ENCODE measurements at regions of chr1 and their contacts with region 1.

Region 1: DNA sequence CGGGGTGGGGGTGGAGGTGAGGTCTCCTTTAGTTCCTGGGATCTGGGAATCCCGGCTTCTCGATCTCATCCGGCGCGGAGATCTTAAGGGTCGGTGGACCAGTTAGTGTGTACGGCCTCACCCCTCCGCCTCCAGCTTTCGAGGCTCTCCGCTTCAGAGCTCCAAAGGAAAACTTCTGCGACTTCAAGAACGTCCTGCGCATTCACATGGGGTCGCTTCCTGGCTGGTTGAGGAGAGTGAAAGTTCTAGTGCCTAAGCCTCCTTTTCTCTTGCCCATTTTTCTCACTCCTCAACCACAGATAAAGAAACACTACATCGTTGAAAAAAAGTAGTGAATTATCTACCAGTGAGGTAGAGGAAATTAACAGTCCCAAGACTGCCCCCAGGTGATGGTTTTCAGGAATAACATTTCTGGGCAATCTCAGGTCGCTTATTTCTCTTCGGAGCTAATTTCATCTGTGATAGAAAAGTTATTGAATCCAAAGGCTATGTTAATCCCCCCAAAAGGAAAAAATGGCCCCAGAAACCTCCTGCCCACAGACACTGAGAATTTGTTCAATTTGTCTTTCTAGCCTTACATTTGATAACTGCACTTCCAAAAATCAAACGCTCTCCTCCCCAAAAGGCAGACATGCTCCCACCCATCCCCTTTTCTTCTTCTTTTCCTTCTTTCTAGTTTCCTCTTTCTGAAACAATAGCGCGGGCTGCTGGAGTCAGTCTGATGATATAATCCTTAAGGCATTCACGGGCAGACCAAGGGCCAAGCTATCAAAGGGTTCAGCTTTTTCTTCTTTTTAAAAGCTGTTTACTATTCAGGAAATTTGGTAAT is 20.6 kb upstream of the TBX15 start:
- DNase-seq: no peak
- ATAC-seq: peak; percentile 39
- H3K4me3 Mint-ChIP-seq: peak overlapping the region; percentile 23
- H3K27ac Mint-ChIP-seq: no peak overlapping the region
- H3K4me1 Mint-ChIP-seq: peaks cover 10% of the 10 kb centered on the region
- H3K27me3 Mint-ChIP-seq: peaks cover 72% of the 10 kb centered on the region
- CTCF ChIP-seq: peak; percentile 51

Region 2: DNA sequence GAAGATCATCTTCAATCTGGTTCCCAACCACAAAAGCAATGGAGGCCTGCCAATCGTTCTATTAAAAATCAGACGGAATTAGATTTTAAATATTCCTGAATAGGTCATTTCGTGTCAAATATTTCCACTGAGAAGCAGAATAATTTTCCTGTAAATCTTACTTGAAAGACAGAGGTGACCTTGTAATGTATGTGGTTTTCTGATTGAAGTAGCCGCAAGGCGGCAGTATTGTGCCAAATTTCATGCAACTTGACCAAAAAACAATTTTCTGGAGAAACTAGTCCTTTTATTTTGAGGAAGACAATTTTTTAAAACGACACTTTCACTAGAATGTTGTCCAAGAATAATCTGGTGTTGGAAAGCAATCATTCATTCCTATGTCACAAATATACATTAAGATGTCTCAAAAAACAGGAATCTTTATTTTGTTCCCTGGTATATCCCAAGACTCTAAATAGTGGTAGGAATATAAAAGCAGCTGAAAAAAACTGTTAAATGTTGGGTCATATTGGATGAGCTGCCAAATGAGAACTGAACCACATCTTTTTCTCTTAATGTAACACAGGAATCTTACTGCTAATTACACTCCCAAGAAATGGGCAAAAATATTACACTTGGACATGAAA is 857.3 kb before region 1 on chr1:
- CTCF ChIA-PET with region 1: interaction called, 8 read pairs
- POLR2A ChIA-PET with region 1: no interaction called
- intact Hi-C with region 1: loop called (anchors 5 kb)
- DNase-seq: peak; percentile 66
- ATAC-seq: no peak
- H3K4me3 Mint-ChIP-seq: no peak overlapping the region
- H3K27ac Mint-ChIP-seq: no peak overlapping the region
- H3K4me1 Mint-ChIP-seq: no peaks in the 10 kb centered on the region
- H3K27me3 Mint-ChIP-seq: no peaks in the 10 kb centered on the region
- CTCF ChIP-seq: peak; percentile 83

Region 3: DNA sequence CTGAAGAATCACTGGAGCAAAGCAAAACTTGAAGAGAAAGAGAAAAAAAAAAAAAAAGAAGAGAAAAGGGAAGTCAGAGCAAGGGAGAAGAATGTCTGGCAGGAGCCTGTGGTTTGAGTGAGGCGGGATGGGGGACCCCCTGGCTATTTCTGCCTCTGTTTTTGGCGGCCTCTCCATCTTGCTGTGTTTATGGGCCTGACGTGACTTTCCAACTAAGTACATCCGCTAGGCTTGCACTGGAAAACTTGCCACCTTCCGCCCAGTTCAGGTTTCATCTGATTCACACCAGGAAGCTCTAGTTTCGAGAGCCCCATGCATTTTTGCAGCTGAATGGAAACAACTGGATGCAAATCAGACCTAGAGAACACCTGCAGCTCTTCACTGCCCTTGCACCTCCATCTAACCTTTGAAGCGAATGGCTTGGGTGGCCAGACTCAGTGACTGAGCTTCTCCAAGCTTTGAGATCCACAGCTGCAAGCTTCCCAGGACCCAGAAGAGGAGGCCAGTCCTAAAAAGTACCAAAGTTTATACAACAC is 48.6 kb before region 1 on chr1:
- CTCF ChIA-PET with region 1: no interaction called
- POLR2A ChIA-PET with region 1: no interaction called
- intact Hi-C with region 1: no loop called
- DNase-seq: no peak
- ATAC-seq: no peak
- H3K4me3 Mint-ChIP-seq: no peak overlapping the region
- H3K27ac Mint-ChIP-seq: no peak overlapping the region
- H3K4me1 Mint-ChIP-seq: no peaks in the 10 kb centered on the region
- H3K27me3 Mint-ChIP-seq: peaks cover 7% of the 10 kb centered on the region
- CTCF ChIP-seq: no peak

Region 4: GRCh38 chr1:118988186-118989005 is 20.3 kb before region 1 on chr1 and contains the start of gene TBX15:
- CTCF ChIA-PET with region 1: interaction called, 13 read pairs
- POLR2A ChIA-PET with region 1: interaction called, 3 read pairs
- intact Hi-C with region 1: no loop called
- DNase-seq: no peak
- ATAC-seq: no peak
- H3K4me3 Mint-ChIP-seq: peak within 1 kb of the TSS; percentile 13
- H3K27ac Mint-ChIP-seq: no peak within 1 kb of the TSS
- H3K4me1 Mint-ChIP-seq: peaks cover 24% of the 10 kb centered on the region
- H3K27me3 Mint-ChIP-seq: peaks cover 87% of the 10 kb centered on the region
- CTCF ChIP-seq: no peak
- total RNA-seq, gene TBX15: not detected